CD4-positive, alpha-beta memory T cell (primary cell): ENCODE measurements at regions of chr15 and their contacts with region 1.

Region 1: DNA sequence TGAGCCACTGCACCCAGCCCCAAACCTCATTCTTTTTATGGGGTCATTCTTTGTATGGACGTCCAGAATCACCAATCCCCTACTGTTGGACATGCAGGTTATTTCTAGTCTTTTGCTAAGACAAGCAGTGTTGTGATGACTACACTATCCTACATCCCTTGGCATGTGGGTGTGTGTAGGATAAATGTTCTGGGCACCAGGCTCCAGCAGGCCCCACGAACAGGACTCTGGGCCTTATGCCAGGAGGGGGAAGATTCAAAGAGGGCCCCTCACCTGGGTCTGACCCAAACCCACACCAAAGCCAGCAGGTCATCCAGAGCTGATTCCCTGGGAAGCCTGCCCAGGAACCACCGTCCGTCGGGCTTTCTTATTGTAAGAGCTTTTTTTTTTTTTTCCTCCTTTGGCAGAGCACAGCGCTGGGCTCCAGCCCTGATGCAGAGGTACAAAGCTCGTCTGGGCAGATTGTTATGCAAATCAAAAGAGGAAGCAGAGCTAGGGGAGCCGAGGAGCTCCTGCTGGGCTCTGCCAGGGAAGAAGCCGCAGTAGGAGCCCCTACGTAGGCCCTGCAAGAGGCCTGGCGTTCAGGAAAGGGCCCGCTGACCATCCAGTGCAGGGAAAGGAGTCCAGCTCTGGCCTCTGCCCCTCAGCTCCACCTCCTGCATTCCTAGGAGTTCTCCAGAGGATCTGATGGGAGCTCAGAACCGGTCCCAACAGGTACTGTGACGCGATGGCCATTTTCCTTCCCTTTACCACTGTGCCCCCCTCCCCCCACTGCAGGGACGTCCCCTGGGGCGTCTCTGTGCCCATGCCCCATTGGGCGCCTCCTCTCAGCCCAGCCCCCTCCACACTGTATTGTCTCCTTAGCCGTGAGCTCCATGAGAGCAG is 29.0 kb upstream of the FURIN start:
- DNase-seq: no peak
- H3K4me3 ChIP-seq: no peak overlapping the region
- H3K4me3 Mint-ChIP-seq: peak overlapping the region in 7 of 8 donors; percentile 17 to 82 (median 43)
- H3K27ac ChIP-seq: peak overlapping the region; percentile 7
- H3K27ac Mint-ChIP-seq: peak overlapping the region; percentile 41 to 98 (median 96)
- H3K4me1 ChIP-seq: peaks cover 33% of the 10 kb centered on the region
- H3K4me1 Mint-ChIP-seq: peaks cover 9 to 30% (median 20%) of the 10 kb centered on the region in 4 donors
- H3K27me3 ChIP-seq: no peaks in the 10 kb centered on the region
- H3K27me3 Mint-ChIP-seq: peaks cover 1% of the 10 kb centered on the region in 2 donors

Region 2: DNA sequence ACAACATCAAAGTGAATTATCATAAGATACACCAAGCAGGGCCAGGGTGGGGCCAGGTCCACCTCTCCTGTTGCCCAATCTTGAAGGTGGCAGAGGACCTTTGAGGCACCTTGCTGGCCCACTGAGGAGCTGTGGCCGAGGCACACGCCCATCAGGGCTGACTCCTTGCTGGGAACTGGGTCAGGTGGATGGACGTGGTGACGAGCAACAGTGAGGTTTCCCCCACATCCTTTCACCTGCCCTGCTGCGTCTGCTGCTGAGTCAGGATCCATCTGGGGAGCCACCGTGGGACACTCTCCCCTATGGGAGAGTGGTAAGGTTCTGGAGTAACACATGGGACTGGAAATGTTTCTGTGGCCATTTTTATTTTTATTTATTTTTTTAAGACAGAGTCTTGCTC is 11.7 kb after region 1 on chr15:
- CTCF ChIA-PET with region 1: interaction called, 3 read pairs
- POLR2A ChIA-PET with region 1: interaction called, 12 read pairs
- intact Hi-C with region 1: no loop called
- DNase-seq: peak; percentile 42 to 75 (median 57)
- H3K4me3 ChIP-seq: no peak overlapping the region
- H3K4me3 Mint-ChIP-seq: peak overlapping the region in 7 of 8 donors; percentile 56 to 81 (median 69)
- H3K27ac ChIP-seq: no peak overlapping the region
- H3K27ac Mint-ChIP-seq: peak overlapping the region; percentile 45 to 97 (median 91)
- H3K4me1 ChIP-seq: peaks cover 45% of the 10 kb centered on the region
- H3K4me1 Mint-ChIP-seq: peaks cover 26 to 53% (median 40%) of the 10 kb centered on the region in 4 donors
- H3K27me3 ChIP-seq: no peaks in the 10 kb centered on the region
- H3K27me3 Mint-ChIP-seq: no peaks in the 10 kb centered on the region